GM12878 (cell line): ENCODE measurements at regions of chr10 and their contacts with region 1.

Region 1: GRCh38 chr10:50896721-50897120 is 11.3 kb upstream of the A1CF start:
- DNase-seq: no peak
- ATAC-seq: no peak
- H3K4me3 ChIP-seq: no peak overlapping the region
- H3K27ac ChIP-seq: no peak overlapping the region
- H3K4me1 ChIP-seq: no peaks in the 10 kb centered on the region
- H3K27me3 ChIP-seq: no peaks in the 10 kb centered on the region; a peak in 1 of 4 replicates
- CTCF ChIP-seq: no peak
- EP300 ChIP-seq: no peak
- POLR2A ChIP-seq: no peak
- RAD21 ChIP-seq: no peak

Region 2: GRCh38 chr10:50674469-50675254 is 222.1 kb before region 1 on chr10:
- CTCF ChIA-PET with region 1: no interaction called
- POLR2A ChIA-PET with region 1: no interaction called
- RAD21 ChIA-PET with region 1: no interaction called
- SMC1A ChIA-PET with region 1: no interaction called
- in situ Hi-C with region 1: no loop called
- intact Hi-C with region 1: loop called (anchors 10 kb)
- DNase-seq: no peak
- ATAC-seq: no peak
- H3K4me3 ChIP-seq: no peak overlapping the region
- H3K27ac ChIP-seq: no peak overlapping the region
- H3K4me1 ChIP-seq: no peaks in the 10 kb centered on the region
- H3K27me3 ChIP-seq: no peaks in the 10 kb centered on the region
- CTCF ChIP-seq: no peak
- EP300 ChIP-seq: no peak
- POLR2A ChIP-seq: no peak
- RAD21 ChIP-seq: no peak

Region 3: GRCh38 chr10:50788951-50789945 is 107.5 kb before region 1 on chr10:
- CTCF ChIA-PET with region 1: interaction called, 3 read pairs
- POLR2A ChIA-PET with region 1: no interaction called
- RAD21 ChIA-PET with region 1: no interaction called
- SMC1A ChIA-PET with region 1: no interaction called
- in situ Hi-C with region 1: no loop called
- intact Hi-C with region 1: loop called (anchors 10 kb)
- DNase-seq: no peak
- ATAC-seq: peak; percentile 62
- H3K4me3 ChIP-seq: no peak overlapping the region
- H3K27ac ChIP-seq: no peak overlapping the region
- H3K4me1 ChIP-seq: no peaks in the 10 kb centered on the region
- H3K27me3 ChIP-seq: no peaks in the 10 kb centered on the region; a peak in 1 of 4 replicates
- CTCF ChIP-seq: peak; percentile 17 to 40 (median 18); a peak in 4 of 6 replicates
- EP300 ChIP-seq: no peak
- POLR2A ChIP-seq: no peak
- RAD21 ChIP-seq: peak; percentile 46

Region 4: DNA sequence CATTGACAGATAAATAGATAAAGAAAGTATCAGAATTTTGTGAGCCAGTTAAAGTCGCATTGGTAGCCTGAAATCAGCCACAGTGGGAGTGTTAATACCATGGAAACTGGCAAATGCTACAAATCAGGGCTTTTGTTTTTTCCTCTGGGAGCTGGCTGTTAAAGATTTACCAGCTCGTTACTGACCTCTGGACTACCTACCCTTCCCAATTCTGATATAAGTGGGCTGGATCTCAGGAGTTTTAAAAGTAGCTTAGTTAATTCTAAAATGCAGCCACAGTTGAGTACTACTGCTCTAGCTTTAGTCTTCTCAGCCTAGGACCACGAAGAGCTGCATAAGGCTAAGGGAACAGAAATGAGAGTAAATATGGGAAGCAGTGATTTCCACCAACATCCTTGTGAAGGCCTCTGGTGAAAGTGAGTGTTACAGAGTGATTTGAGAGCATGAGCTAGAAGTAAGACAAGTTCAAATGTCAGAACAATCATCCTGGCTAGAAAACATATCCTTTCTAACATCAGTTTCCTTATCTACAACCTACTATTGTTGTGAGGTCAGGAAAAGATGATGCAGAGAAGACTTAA is 64.5 kb before region 1 on chr10:
- CTCF ChIA-PET with region 1: no interaction called
- POLR2A ChIA-PET with region 1: no interaction called
- RAD21 ChIA-PET with region 1: no interaction called
- SMC1A ChIA-PET with region 1: no interaction called
- in situ Hi-C with region 1: no loop called
- intact Hi-C with region 1: no loop called
- DNase-seq: no peak
- ATAC-seq: no peak
- H3K4me3 ChIP-seq: no peak overlapping the region
- H3K27ac ChIP-seq: no peak overlapping the region
- H3K4me1 ChIP-seq: no peaks in the 10 kb centered on the region
- H3K27me3 ChIP-seq: no peaks in the 10 kb centered on the region
- CTCF ChIP-seq: no peak
- EP300 ChIP-seq: no peak
- POLR2A ChIP-seq: no peak
- RAD21 ChIP-seq: no peak

Region 5: GRCh38 chr10:51137756-51138529 is 241.2 kb after region 1 on chr10:
- CTCF ChIA-PET with region 1: no interaction called
- POLR2A ChIA-PET with region 1: no interaction called
- RAD21 ChIA-PET with region 1: no interaction called
- SMC1A ChIA-PET with region 1: no interaction called
- in situ Hi-C with region 1: no loop called
- intact Hi-C with region 1: no loop called
- DNase-seq: no peak
- ATAC-seq: peak; percentile 24; the same call in 2 of the 3 replicates
- H3K4me3 ChIP-seq: no peak overlapping the region
- H3K27ac ChIP-seq: no peak overlapping the region
- H3K4me1 ChIP-seq: no peaks in the 10 kb centered on the region
- H3K27me3 ChIP-seq: no peaks in the 10 kb centered on the region
- CTCF ChIP-seq: no peak
- EP300 ChIP-seq: no peak
- POLR2A ChIP-seq: no peak
- RAD21 ChIP-seq: no peak